ENCODE measurements at regions of chr17 and their contacts with region 1.

Region 1: GRCh38 chr17:69516911-69517310 is 102.4 kb downstream of the MAP2K6 start:
- DNase-seq: no peak
- ATAC-seq: peak; percentile 91
- H3K4me3 Mint-ChIP-seq: peak overlapping the region; percentile 48
- H3K27ac Mint-ChIP-seq: peak overlapping the region; percentile 46
- H3K4me1 Mint-ChIP-seq: peaks cover 33% of the 10 kb centered on the region
- H3K27me3 Mint-ChIP-seq: peaks cover 17% of the 10 kb centered on the region
- CTCF ChIP-seq: no peak

Region 2: DNA sequence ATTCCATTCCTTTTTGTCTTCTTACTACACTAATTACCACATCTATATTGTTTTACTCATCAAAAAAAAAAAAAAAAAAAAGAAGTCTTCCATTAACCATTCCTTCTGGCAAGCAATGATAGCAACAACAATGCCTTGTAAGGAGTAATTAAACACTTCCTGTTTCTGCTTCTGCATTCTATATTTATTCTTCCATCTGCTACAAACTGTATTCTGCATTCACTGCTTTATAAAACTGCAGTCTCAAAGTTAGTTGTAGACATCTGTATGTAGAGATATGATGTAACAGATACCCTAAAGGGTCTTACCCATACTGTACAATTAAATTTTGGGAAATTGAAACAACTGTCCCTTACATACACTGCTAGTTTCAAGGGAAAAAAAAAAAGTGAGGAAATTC is 346.5 kb before region 1 on chr17:
- CTCF ChIA-PET with region 1: no interaction called
- POLR2A ChIA-PET with region 1: no interaction called
- intact Hi-C with region 1: no loop called
- DNase-seq: no peak
- ATAC-seq: no peak
- H3K4me3 Mint-ChIP-seq: no peak overlapping the region
- H3K27ac Mint-ChIP-seq: no peak overlapping the region
- H3K4me1 Mint-ChIP-seq: peaks cover 11% of the 10 kb centered on the region
- H3K27me3 Mint-ChIP-seq: no peaks in the 10 kb centered on the region
- CTCF ChIP-seq: no peak

Region 3: DNA sequence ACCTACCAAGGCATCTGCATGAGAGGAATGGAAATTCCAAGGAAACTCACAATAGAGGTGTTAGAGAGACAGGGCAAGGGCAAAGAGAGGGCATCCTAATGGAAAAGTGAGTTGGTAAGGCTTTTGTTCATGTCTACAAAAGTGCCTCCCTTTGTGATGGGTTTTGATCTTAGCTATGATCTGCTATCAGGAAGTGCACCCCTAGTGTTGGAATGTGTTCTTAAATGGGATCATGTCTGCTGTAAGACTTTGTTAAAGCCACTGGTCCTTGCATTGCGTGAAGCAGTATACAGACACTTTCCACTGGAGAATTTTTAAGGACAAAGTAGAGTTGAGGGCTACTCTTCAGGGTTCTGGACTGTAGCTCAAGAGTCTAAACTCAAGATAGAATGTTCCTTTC is 10.4 kb before region 1 on chr17:
- CTCF ChIA-PET with region 1: interaction called, 22 read pairs
- POLR2A ChIA-PET with region 1: interaction called, 22 read pairs
- intact Hi-C with region 1: loop called (anchors 1 kb)
- DNase-seq: no peak
- ATAC-seq: no peak
- H3K4me3 Mint-ChIP-seq: no peak overlapping the region
- H3K27ac Mint-ChIP-seq: no peak overlapping the region
- H3K4me1 Mint-ChIP-seq: peaks cover 44% of the 10 kb centered on the region
- H3K27me3 Mint-ChIP-seq: no peaks in the 10 kb centered on the region
- CTCF ChIP-seq: no peak

Measured in activated B cell treated with CpG ODN at 0.5 μM for 24 hours (primary cell).